Kidney (tissue), 22 donors: ENCODE measurements at regions of chr7 and their contacts with region 1.

Region 1: GRCh38 chr7:152882576-152883310 is 123.2 kb downstream of the ACTR3B start:
- DNase-seq: peak in 1 of 5 donors; percentile 54
- H3K4me3 ChIP-seq: no peak overlapping the region
- H3K27ac ChIP-seq: no peak overlapping the region
- H3K4me1 ChIP-seq: no peaks in the 10 kb centered on the region
- H3K27me3 ChIP-seq: no peaks in the 10 kb centered on the region
- CTCF ChIP-seq: no peak

Region 2: DNA sequence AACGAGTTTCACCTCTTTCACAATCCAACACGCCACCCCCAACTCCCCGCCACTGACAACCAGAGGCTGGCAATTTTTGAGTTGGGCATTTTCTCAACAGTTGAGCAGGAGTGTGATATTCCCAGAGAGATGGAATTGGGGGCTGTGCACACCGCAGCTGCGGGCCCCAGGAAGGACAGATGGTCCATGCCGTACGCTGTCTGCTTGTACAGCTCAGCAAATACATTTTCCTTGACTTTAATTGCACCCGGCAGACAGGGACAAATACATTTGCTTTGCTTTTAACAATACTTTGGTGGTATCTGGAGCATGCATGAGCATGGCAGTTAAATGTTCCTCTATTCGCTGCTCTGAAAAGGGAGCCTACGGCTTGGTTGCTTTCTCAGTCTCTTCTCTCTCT is 815.3 kb after region 1 on chr7:
- intact Hi-C with region 1: loop called (anchors 10 kb)
- DNase-seq: no peak
- H3K4me3 ChIP-seq: no peak overlapping the region
- H3K27ac ChIP-seq: no peak overlapping the region
- H3K4me1 ChIP-seq: no peaks in the 10 kb centered on the region
- H3K27me3 ChIP-seq: no peaks in the 10 kb centered on the region
- CTCF ChIP-seq: no peak